ENCODE measurements at regions of chr11 and their contacts with region 1.

Region 1: GRCh38 chr11:36455658-36456111 is 54.4 kb downstream of the TRAF6 start:
- H3K4me3 Mint-ChIP-seq: no peak overlapping the region
- H3K27ac Mint-ChIP-seq: peak overlapping the region; percentile 37
- H3K4me1 Mint-ChIP-seq: peaks cover 43% of the 10 kb centered on the region
- H3K27me3 Mint-ChIP-seq: peaks cover 34% of the 10 kb centered on the region

Region 2: GRCh38 chr11:36425561-36426081 is 30.1 kb before region 1 on chr11:
- intact Hi-C with region 1: loop called (anchors 5 kb)
- H3K4me3 Mint-ChIP-seq: no peak overlapping the region
- H3K27ac Mint-ChIP-seq: peak overlapping the region; percentile 65
- H3K4me1 Mint-ChIP-seq: peaks cover 58% of the 10 kb centered on the region
- H3K27me3 Mint-ChIP-seq: peaks cover 19% of the 10 kb centered on the region

Region 3: DNA sequence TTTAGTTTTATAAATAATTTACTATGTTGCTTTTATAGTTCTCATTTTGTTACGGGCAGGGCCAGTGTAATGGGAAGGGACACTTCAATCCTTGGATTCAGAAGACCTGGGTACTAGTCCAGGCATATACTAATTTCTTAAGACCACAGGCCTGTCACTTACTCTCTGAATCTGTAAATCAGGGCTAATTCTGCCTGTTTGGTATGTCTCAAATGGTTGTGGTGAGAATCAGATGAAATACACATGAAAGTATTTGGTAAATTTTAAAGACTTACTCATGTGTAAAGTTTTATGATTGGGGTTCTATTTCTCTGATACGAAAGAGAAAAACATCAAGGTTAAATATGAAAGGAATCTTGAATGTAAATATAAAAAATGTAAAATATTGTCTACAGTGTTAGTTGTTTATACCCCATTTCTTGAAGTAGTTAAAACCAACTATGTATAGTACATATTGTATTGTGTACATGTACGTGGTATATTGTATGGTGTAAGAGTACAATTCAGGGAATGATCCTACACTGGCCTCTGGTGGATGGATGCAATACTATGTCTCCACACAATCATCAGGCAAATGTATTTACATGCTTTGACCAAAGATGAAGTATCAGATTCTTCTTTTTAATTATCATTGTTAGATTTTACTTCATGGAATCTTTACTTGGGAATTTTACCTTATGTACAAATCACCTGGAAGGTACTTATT is 166.9 kb after region 1 on chr11:
- intact Hi-C with region 1: no loop called
- H3K4me3 Mint-ChIP-seq: no peak overlapping the region
- H3K27ac Mint-ChIP-seq: no peak overlapping the region
- H3K4me1 Mint-ChIP-seq: peaks cover 15% of the 10 kb centered on the region
- H3K27me3 Mint-ChIP-seq: no peaks in the 10 kb centered on the region

Measured in dendritic cell treated with granulocyte-macrophage colony-stimulating factor and Interleukin-4, amounts not matched to agents 40 ng/mL and 50 ng/mL, for 4 days (primary cell).